Esophagus squamous epithelium (tissue), 5 donors: ENCODE measurements at regions of chr4 and their contacts with region 1.

Region 1: DNA sequence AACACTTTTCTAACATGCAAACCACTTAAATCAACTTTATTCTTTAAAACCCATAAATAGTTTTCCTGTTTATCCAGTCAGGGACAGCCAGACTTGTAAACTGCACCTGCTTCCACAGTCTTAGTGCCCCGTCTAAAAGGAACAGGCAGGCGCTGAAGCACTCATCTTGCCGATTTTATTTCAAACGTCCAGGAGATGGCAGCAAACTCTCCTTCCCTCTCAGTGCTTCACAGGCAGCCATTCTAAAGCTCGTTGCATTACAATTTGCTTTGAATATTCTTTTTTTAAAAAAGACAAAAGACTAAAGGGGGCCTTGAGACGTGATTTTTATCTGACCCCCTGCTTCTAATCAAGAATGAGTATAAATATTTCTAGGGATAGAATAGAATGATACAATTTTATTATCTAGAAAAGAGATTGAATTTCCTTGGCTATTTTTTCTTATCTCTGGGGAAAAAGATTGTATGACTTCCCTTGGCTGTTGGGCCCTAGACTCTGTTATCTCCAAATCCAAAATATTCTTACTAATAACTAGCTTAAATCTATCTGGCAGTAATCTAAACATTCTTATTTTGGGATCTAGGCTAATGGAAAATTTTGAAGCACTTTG is 93.6 kb upstream of the MYOZ2 start:
- DNase-seq: no peak
- H3K4me3 ChIP-seq: no peak overlapping the region
- H3K27ac ChIP-seq: peak overlapping the region in 3 of 4 donors; percentile 23 to 90 (median 81)
- H3K4me1 ChIP-seq: peaks cover 3 to 72% (median 4%) of the 10 kb centered on the region in 3 donors
- H3K27me3 ChIP-seq: no peaks in the 10 kb centered on the region
- CTCF ChIP-seq: peak; percentile 50 to 78 (median 68)
- POLR2A ChIP-seq: no peak

Region 2: GRCh38 chr4:118981839-118982381 is 60.1 kb before region 1 on chr4:
- intact Hi-C with region 1: loop called (anchors 10 kb)
- DNase-seq: no peak
- H3K4me3 ChIP-seq: peak overlapping the region in 1 of 4 donors; percentile 15
- H3K27ac ChIP-seq: peak overlapping the region in 3 of 4 donors; percentile 51 to 61 (median 61)
- H3K4me1 ChIP-seq: peaks cover 0 to 20% (median 0%) of the 10 kb centered on the region in 3 donors
- H3K27me3 ChIP-seq: no peaks in the 10 kb centered on the region
- CTCF ChIP-seq: peak; percentile 39 to 87 (median 74)
- POLR2A ChIP-seq: no peak

Region 3: GRCh38 chr4:119212234-119212963 is 170.3 kb after region 1 on chr4 and contains the start of gene USP53:
- intact Hi-C with region 1: loop called (anchors 10 kb)
- DNase-seq: peak; percentile 82
- H3K4me3 ChIP-seq: peak within 1 kb of the TSS; percentile 61 to 91 (median 74)
- H3K27ac ChIP-seq: peak within 1 kb of the TSS; percentile 95 to 99 (median 98)
- H3K4me1 ChIP-seq: peaks cover 9 to 44% (median 12%) of the 10 kb centered on the region in 3 donors
- H3K27me3 ChIP-seq: no peaks in the 10 kb centered on the region
- CTCF ChIP-seq: peak in 2 of 6 experiments; percentile 17 to 62
- POLR2A ChIP-seq: peak in 3 of 4 donors; percentile 84 to 97 (median 97)
- total RNA-seq, gene USP53: 21.9 to 71.5 (median 29.9) TPM

Region 4: DNA sequence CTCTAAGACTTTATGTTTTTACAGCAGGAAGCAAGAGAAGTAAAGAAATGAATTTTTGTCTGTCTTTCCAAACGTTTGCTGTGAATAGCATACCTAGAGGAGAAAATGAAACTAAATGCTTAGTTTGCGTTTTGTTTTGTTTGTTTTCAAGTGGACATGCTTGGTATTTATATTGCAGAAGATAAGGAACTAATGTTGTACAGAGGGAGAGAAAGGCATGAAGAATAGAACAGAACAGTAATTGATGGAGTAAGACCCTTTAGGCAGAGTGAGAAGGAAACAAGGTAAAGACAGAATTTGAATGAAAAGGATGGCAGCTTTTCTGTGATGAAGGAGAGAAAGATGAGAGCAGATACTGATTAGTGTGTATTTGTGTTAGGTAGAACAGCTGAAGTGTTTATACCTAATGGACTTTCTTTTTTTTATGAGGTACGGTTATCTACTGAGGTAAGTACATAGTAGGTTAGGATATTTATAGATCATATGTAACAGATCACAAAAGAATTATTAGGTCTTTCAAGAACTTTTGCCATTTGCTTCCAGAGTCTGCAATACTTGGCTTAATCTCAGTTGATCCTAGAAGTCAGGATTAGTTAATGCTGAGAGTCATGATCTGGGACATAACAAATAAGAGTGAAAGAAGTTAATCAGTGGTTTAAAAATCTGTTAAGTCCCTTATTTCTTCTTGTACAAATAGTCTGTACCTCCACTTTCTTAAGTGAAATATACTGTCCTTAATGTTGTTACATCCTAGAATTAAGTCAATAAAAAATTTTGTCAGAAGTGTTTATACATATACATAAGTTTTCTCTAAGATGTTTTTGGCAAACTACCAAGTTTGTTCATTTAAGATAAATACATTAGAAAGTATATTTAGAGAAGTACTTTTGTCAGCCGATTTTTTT is 243.1 kb after region 1 on chr4:
- intact Hi-C with region 1: loop called (anchors 5 kb)
- DNase-seq: no peak
- H3K4me3 ChIP-seq: peak overlapping the region in 1 of 4 donors; percentile 4
- H3K27ac ChIP-seq: peak overlapping the region in 2 of 4 donors; percentile 48 to 59
- H3K4me1 ChIP-seq: peaks cover 9 to 32% (median 16%) of the 10 kb centered on the region in 3 donors
- H3K27me3 ChIP-seq: no peaks in the 10 kb centered on the region
- CTCF ChIP-seq: peak in 3 of 6 experiments; percentile 16 to 49 (median 36)
- POLR2A ChIP-seq: no peak